CD4-positive, alpha-beta memory T cell (primary cell): ENCODE measurements at regions of chr6 and their contacts with region 1.

Region 1: GRCh38 chr6:52419809-52420670 is at the start of gene EFHC1:
- DNase-seq: peak; percentile 97 to 98 (median 97)
- H3K4me3 ChIP-seq: peak within 1 kb of the TSS; percentile 71
- H3K4me3 Mint-ChIP-seq: no peak within 1 kb of the TSS
- H3K27ac ChIP-seq: peak within 1 kb of the TSS; percentile 59
- H3K27ac Mint-ChIP-seq: peak within 1 kb of the TSS in 3 of 7 donors; percentile 69 to 94 (median 85)
- H3K4me1 ChIP-seq: peaks cover 24% of the 10 kb centered on the region
- H3K4me1 Mint-ChIP-seq: peaks cover 12 to 21% (median 16%) of the 10 kb centered on the region in 4 donors
- H3K27me3 ChIP-seq: no peaks in the 10 kb centered on the region
- H3K27me3 Mint-ChIP-seq: no peaks in the 10 kb centered on the region
- total RNA-seq, gene EFHC1: 6.4 to 10.4 TPM

Region 2: GRCh38 chr6:52063584-52064344 is 356.3 kb before region 1 on chr6:
- CTCF ChIA-PET with region 1: interaction called, 3 read pairs
- POLR2A ChIA-PET with region 1: no interaction called
- intact Hi-C with region 1: loop called (anchors 10 kb)
- DNase-seq: peak; percentile 59 to 68 (median 60)
- H3K4me3 ChIP-seq: peak overlapping the region in 1 of 2 donors; percentile 36
- H3K4me3 Mint-ChIP-seq: peak overlapping the region; percentile 80 to 92 (median 86)
- H3K27ac ChIP-seq: no peak overlapping the region
- H3K27ac Mint-ChIP-seq: peak overlapping the region; percentile 30 to 96 (median 80)
- H3K4me1 ChIP-seq: peaks cover 14% of the 10 kb centered on the region
- H3K4me1 Mint-ChIP-seq: peaks cover 11 to 14% (median 12%) of the 10 kb centered on the region in 4 donors
- H3K27me3 ChIP-seq: no peaks in the 10 kb centered on the region
- H3K27me3 Mint-ChIP-seq: peaks cover 0 to 2% of the 10 kb centered on the region in 2 donors

Region 3: DNA sequence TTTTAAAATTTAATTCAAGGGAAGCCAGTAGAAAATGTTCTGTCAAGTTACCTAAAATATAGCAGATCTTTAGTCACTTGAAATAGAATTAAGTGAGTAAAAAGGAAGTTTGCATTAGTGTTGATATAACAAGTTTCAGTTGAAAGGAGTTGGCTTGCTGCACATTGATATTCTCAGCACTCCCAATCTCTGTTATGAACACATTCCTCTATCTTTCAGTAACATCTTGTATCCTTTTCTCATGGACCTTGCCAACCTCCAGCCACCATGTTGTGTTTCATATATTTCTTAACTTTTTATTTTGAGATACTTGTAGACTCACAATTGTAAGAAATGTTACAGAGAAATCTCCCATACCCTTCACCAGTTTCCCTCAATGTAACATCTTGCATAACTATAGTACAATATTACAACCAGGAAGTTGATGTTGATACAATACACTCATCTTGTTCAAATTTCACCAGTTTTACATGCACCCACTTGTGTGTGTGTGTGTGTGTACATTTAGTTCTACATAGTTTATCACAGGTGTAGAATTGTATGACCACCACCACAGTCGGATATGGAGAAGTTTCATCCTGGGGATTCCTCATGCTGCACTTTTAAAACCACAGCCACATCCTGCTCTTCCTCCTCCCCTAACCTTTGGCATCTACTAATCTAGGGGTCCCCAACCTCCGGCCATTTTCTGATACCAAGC is 78.3 kb before region 1 on chr6:
- CTCF ChIA-PET with region 1: no interaction called
- POLR2A ChIA-PET with region 1: no interaction called
- intact Hi-C with region 1: no loop called
- DNase-seq: no peak
- H3K4me3 ChIP-seq: no peak overlapping the region
- H3K4me3 Mint-ChIP-seq: peak overlapping the region in 2 of 8 donors; percentile 6 to 30
- H3K27ac ChIP-seq: no peak overlapping the region
- H3K27ac Mint-ChIP-seq: peak overlapping the region in 3 of 7 donors; percentile 5 to 65 (median 18)
- H3K4me1 ChIP-seq: peaks cover 20% of the 10 kb centered on the region
- H3K4me1 Mint-ChIP-seq: peaks cover 13 to 28% (median 20%) of the 10 kb centered on the region in 4 donors
- H3K27me3 ChIP-seq: no peaks in the 10 kb centered on the region
- H3K27me3 Mint-ChIP-seq: no peaks in the 10 kb centered on the region

Region 4: DNA sequence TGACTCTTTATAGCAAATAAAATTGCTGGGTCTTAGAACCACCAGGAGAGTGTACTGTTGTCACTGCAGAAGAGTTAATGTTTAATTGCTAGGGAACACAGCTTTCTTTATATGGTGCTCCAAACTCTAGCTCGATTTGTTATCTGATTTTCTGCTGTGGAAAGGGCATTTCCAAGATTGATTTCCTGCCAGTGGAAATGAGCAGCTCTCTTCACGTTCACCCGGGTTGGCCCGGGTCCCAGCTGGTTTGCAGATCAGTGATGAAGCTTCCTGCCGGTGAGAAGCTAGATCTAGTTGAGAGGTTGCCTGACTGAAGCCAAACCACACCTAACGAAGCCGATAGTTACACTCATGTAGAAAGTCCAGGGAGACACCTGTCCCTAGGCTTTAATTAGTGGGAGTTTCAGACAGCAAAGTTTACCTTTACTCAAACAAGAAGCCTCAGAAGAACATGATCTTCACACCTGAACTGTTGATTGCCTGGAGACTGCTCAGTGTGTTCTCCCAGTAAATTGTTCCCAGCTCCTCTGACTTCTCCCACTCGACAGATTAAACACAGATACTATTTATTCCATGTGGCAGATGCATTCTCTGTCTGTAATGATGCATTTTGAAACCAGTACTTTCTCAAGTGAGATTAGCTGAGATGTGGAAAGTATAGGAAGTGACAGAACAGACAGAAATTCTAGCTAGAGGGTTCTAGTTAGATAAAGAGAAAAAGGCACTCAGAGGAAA is 30.2 kb before region 1 on chr6:
- CTCF ChIA-PET with region 1: interaction called, 32 read pairs
- POLR2A ChIA-PET with region 1: interaction called, 24 read pairs
- intact Hi-C with region 1: no loop called
- DNase-seq: peak; percentile 66 to 85 (median 69)
- H3K4me3 ChIP-seq: peak overlapping the region; percentile 14 to 34
- H3K4me3 Mint-ChIP-seq: peak overlapping the region; percentile 77 to 92 (median 82)
- H3K27ac ChIP-seq: peak overlapping the region; percentile 80
- H3K27ac Mint-ChIP-seq: peak overlapping the region; percentile 95 to 99 (median 97)
- H3K4me1 ChIP-seq: peaks cover 90% of the 10 kb centered on the region
- H3K4me1 Mint-ChIP-seq: peaks cover 67 to 94% (median 81%) of the 10 kb centered on the region in 4 donors
- H3K27me3 ChIP-seq: no peaks in the 10 kb centered on the region
- H3K27me3 Mint-ChIP-seq: no peaks in the 10 kb centered on the region

Region 5: GRCh38 chr6:52407467-52407866 is 12.6 kb before region 1 on chr6:
- CTCF ChIA-PET with region 1: interaction called, 99 read pairs
- POLR2A ChIA-PET with region 1: interaction called, 5 read pairs
- intact Hi-C with region 1: no loop called
- DNase-seq: peak in 3 of 5 donors; percentile 35 to 43 (median 37)
- H3K4me3 ChIP-seq: no peak overlapping the region
- H3K4me3 Mint-ChIP-seq: peak overlapping the region in 1 of 8 donors; percentile 13
- H3K27ac ChIP-seq: no peak overlapping the region
- H3K27ac Mint-ChIP-seq: peak overlapping the region in 6 of 7 donors; percentile 18 to 88 (median 62)
- H3K4me1 ChIP-seq: no peaks in the 10 kb centered on the region
- H3K4me1 Mint-ChIP-seq: peaks cover 0 to 22% (median 11%) of the 10 kb centered on the region in 4 donors
- H3K27me3 ChIP-seq: no peaks in the 10 kb centered on the region
- H3K27me3 Mint-ChIP-seq: no peaks in the 10 kb centered on the region

Region 6: GRCh38 chr6:52435345-52435744 is 15.3 kb after region 1 on chr6:
- CTCF ChIA-PET with region 1: no interaction called
- POLR2A ChIA-PET with region 1: no interaction called
- intact Hi-C with region 1: no loop called
- DNase-seq: no peak
- H3K4me3 ChIP-seq: no peak overlapping the region
- H3K4me3 Mint-ChIP-seq: no peak overlapping the region
- H3K27ac ChIP-seq: no peak overlapping the region
- H3K27ac Mint-ChIP-seq: no peak overlapping the region
- H3K4me1 ChIP-seq: no peaks in the 10 kb centered on the region
- H3K4me1 Mint-ChIP-seq: no peaks in the 10 kb centered on the region
- H3K27me3 ChIP-seq: no peaks in the 10 kb centered on the region
- H3K27me3 Mint-ChIP-seq: no peaks in the 10 kb centered on the region

Region 7: DNA sequence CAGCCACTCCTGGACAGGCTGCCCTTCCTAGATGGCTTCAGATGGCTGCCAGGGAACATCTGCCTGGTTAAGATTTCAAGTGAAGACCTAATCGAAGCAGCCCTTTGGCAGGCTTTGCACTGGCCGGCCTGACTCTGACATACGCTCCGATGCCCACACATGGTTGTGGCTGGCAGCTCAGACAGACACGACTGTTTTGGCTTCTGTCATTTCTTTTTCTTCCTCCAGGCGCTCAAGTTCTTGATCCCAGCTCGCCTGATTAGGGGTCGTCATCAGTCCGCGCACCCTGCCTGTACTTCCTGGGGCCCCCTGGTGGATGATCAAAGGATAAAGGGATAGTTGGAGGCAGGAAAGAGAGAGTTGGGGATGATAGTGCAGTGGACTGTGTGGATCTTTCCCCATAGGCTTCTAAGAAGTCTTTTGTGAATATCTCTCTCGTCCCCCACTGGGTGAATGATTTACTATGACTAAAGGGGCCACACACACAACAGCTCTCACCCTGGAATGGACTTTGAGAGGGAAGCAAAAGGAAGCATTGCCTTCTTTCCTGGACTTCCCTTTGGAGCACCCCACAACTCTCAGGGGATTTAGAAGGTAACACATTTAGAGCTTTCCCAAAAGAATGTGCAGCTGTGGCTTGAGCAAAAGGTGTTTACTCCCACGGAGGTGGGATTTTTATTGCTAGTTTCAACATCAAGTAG is 178.2 kb after region 1 on chr6:
- CTCF ChIA-PET with region 1: interaction called, 17 read pairs
- POLR2A ChIA-PET with region 1: interaction called, 3 read pairs
- intact Hi-C with region 1: loop called (anchors 5 kb)
- DNase-seq: peak in 1 of 5 donors; percentile 11
- H3K4me3 ChIP-seq: no peak overlapping the region
- H3K4me3 Mint-ChIP-seq: no peak overlapping the region
- H3K27ac ChIP-seq: no peak overlapping the region
- H3K27ac Mint-ChIP-seq: peak overlapping the region in 1 of 7 donors; percentile 15
- H3K4me1 ChIP-seq: no peaks in the 10 kb centered on the region
- H3K4me1 Mint-ChIP-seq: peaks cover 0 to 7% (median 4%) of the 10 kb centered on the region in 4 donors
- H3K27me3 ChIP-seq: no peaks in the 10 kb centered on the region
- H3K27me3 Mint-ChIP-seq: peaks cover 3 to 5% of the 10 kb centered on the region in 2 donors

Region 8: GRCh38 chr6:52664186-52664990 is 244.3 kb after region 1 on chr6:
- CTCF ChIA-PET with region 1: interaction called, 82 read pairs
- POLR2A ChIA-PET with region 1: interaction called, 5 read pairs
- intact Hi-C with region 1: loop called (anchors 1 kb)
- DNase-seq: peak; percentile 37 to 56 (median 44)
- H3K4me3 ChIP-seq: peak overlapping the region; percentile 48 to 66
- H3K4me3 Mint-ChIP-seq: no peak overlapping the region
- H3K27ac ChIP-seq: peak overlapping the region; percentile 2
- H3K27ac Mint-ChIP-seq: no peak overlapping the region
- H3K4me1 ChIP-seq: peaks cover 13% of the 10 kb centered on the region
- H3K4me1 Mint-ChIP-seq: peaks cover 0 to 1% (median 0%) of the 10 kb centered on the region in 4 donors
- H3K27me3 ChIP-seq: no peaks in the 10 kb centered on the region
- H3K27me3 Mint-ChIP-seq: peaks cover 1 to 2% of the 10 kb centered on the region in 2 donors

Region 9: DNA sequence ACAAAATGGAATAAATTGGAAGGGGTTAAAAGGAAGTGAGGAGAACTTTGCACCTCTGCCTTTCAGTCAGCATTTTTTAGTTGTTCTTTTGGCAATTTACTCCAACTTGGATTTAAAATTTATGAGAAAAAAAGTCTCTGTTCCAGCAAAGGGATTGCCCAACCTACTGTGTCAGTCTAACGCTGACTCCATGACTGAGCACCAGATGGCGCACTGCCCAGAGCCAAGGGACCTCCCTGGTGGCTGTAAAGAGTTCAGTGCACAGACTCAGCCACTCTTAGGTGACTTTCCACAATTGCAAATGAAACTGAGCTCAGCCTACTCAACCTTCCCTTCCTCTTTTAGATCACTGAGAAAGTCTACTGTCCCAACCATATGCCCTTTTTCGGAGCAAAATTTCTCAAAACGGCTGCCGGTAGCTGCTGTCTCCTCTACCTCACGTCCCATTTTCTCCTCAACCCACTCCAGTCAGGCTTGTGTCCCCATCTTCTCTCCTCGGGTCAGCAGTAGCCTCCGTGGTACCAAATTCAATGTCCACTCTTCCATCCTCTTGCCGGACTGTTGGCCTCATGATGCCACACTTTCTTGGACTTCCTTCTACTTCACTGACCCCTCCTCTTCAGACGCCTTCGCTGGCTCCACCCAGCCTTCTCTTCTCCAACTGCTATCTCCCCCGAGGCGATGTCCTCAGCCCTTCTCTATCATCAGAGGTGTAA is 304.5 kb after region 1 on chr6:
- CTCF ChIA-PET with region 1: no interaction called
- POLR2A ChIA-PET with region 1: no interaction called
- intact Hi-C with region 1: no loop called
- DNase-seq: peak; percentile 8 to 48 (median 23)
- H3K4me3 ChIP-seq: no peak overlapping the region
- H3K4me3 Mint-ChIP-seq: no peak overlapping the region
- H3K27ac ChIP-seq: no peak overlapping the region
- H3K27ac Mint-ChIP-seq: no peak overlapping the region
- H3K4me1 ChIP-seq: no peaks in the 10 kb centered on the region
- H3K4me1 Mint-ChIP-seq: no peaks in the 10 kb centered on the region
- H3K27me3 ChIP-seq: no peaks in the 10 kb centered on the region
- H3K27me3 Mint-ChIP-seq: peaks cover 2 to 5% of the 10 kb centered on the region in 2 donors

Region 10: GRCh38 chr6:53544470-53545308 is 1124.6 kb after region 1 on chr6 and contains the start of gene GCLC:
- CTCF ChIA-PET with region 1: no interaction called
- POLR2A ChIA-PET with region 1: no interaction called
- intact Hi-C with region 1: loop called (anchors 10 kb)
- DNase-seq: peak; percentile 82 to 85 (median 84)
- H3K4me3 ChIP-seq: peak within 1 kb of the TSS; percentile 61 to 63
- H3K4me3 Mint-ChIP-seq: peak within 1 kb of the TSS; percentile 95 to 99 (median 98)
- H3K27ac ChIP-seq: peak within 1 kb of the TSS; percentile 59
- H3K27ac Mint-ChIP-seq: peak within 1 kb of the TSS; percentile 79 to 96 (median 94)
- H3K4me1 ChIP-seq: peaks cover 51% of the 10 kb centered on the region
- H3K4me1 Mint-ChIP-seq: peaks cover 47 to 73% (median 59%) of the 10 kb centered on the region in 4 donors
- H3K27me3 ChIP-seq: no peaks in the 10 kb centered on the region
- H3K27me3 Mint-ChIP-seq: no peaks in the 10 kb centered on the region
- total RNA-seq, gene GCLC: 39.6 to 40.9 TPM